ENCODE measurements at regions of chr16 and their contacts with region 1.

Region 1: DNA sequence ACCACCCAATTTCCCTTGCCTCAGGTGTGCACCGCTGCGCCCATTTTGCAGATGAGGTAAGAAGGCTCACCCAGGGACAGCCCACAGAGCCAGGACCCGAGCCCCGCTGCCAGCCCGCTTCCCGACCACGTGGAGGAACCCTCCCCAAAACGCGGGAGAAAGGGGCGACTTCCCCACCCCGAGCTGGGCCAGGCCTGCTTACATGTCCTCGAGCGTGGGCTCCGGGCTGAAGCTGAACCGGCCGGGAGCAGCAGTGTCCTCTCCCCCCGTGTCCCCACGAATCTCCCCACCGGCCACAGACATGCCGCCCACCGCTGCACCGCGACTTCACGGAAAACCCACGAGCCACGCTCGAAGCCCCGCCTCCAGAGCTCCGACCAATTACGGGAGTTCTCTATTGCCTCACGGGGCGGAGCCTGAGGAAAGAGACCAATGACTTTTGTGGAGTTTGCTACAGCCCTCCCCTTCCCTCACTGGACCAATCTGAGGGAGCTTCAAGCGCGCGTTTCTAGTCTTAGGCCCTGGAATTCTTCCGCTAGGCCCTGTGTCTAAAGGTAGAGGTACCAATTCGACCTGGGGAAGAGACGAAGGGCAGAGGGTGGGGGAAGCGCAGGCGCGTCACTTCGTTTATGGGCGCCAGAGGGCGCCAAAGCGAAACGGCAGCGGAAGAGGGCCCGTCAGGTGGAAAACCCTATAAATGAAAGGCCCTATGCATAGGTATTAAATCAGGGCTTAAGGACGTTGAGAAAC is at the start of gene DCTPP1:
- DNase-seq: peak; percentile 99
- ATAC-seq: peak; percentile 98
- H3K4me3 ChIP-seq: peak within 1 kb of the TSS; percentile 93
- H3K27ac ChIP-seq: peak within 1 kb of the TSS; percentile 81
- H3K4me1 ChIP-seq: peaks cover 13% of the 10 kb centered on the region
- H3K27me3 ChIP-seq: no peaks in the 10 kb centered on the region
- CTCF ChIP-seq: peak; percentile 85 to 92 (median 90)
- EP300 ChIP-seq: 0 out of 4 replicates have a peak, but pooled peaks of 1 of the 2 experiments have one; percentile 30
- POLR2A ChIP-seq: peak; percentile 84
- RAD21 ChIP-seq: peak; percentile 78
- polyA plus RNA-seq, gene DCTPP1: 76.6 to 162 TPM

Region 2: GRCh38 chr16:30091474-30092372 is 338.1 kb before region 1 on chr16 and contains the start of gene TBX6:
- CTCF ChIA-PET with region 1: interaction called, 10 read pairs
- POLR2A ChIA-PET with region 1: interaction called, 3 read pairs
- RAD21 ChIA-PET with region 1: interaction called, 3 read pairs
- SMC1A ChIA-PET with region 1: interaction called, 4 read pairs
- in situ Hi-C with region 1: no loop called
- intact Hi-C with region 1: no loop called
- DNase-seq: peak; percentile 64
- ATAC-seq: peak; percentile 88
- H3K4me3 ChIP-seq: peak within 1 kb of the TSS; percentile 72
- H3K27ac ChIP-seq: peak within 1 kb of the TSS; percentile 88
- H3K4me1 ChIP-seq: peaks cover 26% of the 10 kb centered on the region
- H3K27me3 ChIP-seq: no peaks in the 10 kb centered on the region
- CTCF ChIP-seq: peak; percentile 82 to 95 (median 83)
- EP300 ChIP-seq: no peak
- POLR2A ChIP-seq: peak; percentile 84
- RAD21 ChIP-seq: peak; percentile 58
- polyA plus RNA-seq, gene TBX6: not detected

Region 3: DNA sequence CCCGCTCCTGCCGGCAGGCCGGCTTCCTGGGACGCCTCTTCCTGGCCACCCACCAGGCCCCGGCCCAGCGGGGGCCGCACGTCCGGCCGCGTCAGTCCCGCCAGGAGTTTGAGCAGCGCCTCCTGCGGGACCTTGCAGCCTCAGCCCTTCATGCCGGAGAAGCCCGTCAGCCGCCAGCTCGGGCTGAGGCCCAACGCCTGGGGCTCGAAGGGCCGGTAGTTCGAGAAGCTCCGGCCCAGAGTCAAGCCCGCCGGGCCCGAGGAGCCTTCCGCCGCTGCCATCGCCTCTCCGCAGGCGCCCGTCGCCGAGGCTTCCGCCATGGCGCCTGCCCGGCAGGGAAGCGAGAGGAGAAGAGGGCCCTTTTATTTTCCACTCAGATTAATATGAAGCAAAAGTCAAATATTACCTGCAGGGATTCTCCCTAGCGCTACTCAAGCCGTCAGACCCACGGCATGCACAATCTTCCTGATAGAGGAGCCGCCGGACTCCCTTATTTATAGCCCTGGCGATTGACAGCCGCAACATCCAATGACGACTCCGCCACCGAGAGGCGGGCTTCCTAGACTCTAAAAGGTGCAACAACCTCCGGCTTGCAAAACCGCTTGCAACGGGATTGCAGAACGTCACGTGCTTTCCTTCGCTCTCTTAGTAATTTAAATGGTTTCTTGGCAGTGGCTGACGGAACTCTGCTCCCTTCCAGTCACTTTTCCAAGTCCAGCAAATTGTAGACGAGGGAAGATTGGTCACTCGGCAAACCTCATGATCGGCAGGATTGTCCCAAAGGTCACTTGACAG is 15.8 kb after region 1 on chr16 and contains the start of gene SEPHS2:
- CTCF ChIA-PET with region 1: interaction called, 19 read pairs
- POLR2A ChIA-PET with region 1: interaction called, 6 read pairs
- RAD21 ChIA-PET with region 1: interaction called, 19 read pairs
- SMC1A ChIA-PET with region 1: interaction called, 18 read pairs
- in situ Hi-C with region 1: no loop called
- intact Hi-C with region 1: no loop called
- DNase-seq: peak; percentile 84
- ATAC-seq: peak; percentile 94
- H3K4me3 ChIP-seq: peak within 1 kb of the TSS; percentile 79
- H3K27ac ChIP-seq: peak within 1 kb of the TSS; percentile 85
- H3K4me1 ChIP-seq: peaks cover 10% of the 10 kb centered on the region
- H3K27me3 ChIP-seq: no peaks in the 10 kb centered on the region
- CTCF ChIP-seq: peak; percentile 38 to 52 (median 49); a peak in 5 of 6 replicates
- EP300 ChIP-seq: no peak
- POLR2A ChIP-seq: peak; percentile 90
- RAD21 ChIP-seq: no peak
- polyA plus RNA-seq, gene SEPHS2: 21.6 to 37.4 TPM

Region 4: DNA sequence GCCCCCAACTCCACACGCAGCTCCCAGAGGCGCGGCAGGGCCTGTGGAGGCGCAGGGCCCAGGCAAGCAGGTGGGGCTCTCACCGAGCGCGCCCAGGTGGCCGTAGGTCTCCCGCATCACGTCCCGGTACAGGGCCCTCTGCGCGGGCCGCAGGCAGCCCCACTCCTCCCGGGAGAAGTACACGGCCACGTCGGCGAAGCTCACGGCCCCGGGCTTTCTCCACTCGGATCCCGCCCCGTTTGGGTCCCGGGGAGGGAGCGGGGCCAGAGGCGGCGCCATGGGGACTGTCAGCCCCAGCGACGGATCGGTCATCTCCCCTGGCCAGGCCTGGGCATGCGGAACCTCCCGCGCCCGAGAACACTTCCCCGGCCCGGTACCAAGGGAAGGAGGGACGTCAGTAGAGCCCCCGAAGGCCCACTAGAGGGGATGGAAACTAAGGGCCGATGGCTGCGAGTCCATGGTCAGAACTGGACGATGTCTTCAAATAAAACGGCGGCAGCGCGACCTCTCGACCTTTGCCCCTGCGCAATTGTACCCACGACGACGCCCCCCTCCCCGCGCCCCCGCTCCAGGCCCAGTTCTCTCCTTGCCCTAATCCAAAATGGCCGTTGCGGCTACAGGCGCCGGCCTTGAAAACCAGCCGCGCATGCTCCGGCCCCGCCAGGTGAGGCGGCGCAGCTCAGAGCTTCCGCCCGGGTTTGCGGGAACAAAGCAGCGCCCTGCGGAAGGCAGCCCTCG is 104.7 kb after region 1 on chr16 and contains the start of gene ZNF747:
- CTCF ChIA-PET with region 1: interaction called, 81 read pairs
- POLR2A ChIA-PET with region 1: interaction called, 23 read pairs
- RAD21 ChIA-PET with region 1: interaction called, 129 read pairs
- SMC1A ChIA-PET with region 1: interaction called, 43 read pairs
- in situ Hi-C with region 1: no loop called
- intact Hi-C with region 1: loop called (anchors 2 kb)
- DNase-seq: peak; percentile 51
- ATAC-seq: peak; percentile 89
- H3K4me3 ChIP-seq: peak within 1 kb of the TSS; percentile 90
- H3K27ac ChIP-seq: peak within 1 kb of the TSS; percentile 85
- H3K4me1 ChIP-seq: no peaks in the 10 kb centered on the region
- H3K27me3 ChIP-seq: no peaks in the 10 kb centered on the region
- CTCF ChIP-seq: peak in 1 of 3 experiments; percentile 1; a peak in 1 of 6 replicates
- EP300 ChIP-seq: no peak
- POLR2A ChIP-seq: peak; percentile 76
- RAD21 ChIP-seq: no peak
- polyA plus RNA-seq, gene ZNF747: 1.0 to 1.2 TPM

Region 5: GRCh38 chr16:30602616-30603277 is 172.9 kb after region 1 on chr16:
- CTCF ChIA-PET with region 1: interaction called, 89 read pairs
- POLR2A ChIA-PET with region 1: interaction called, 3 read pairs
- RAD21 ChIA-PET with region 1: interaction called, 49 read pairs
- SMC1A ChIA-PET with region 1: interaction called, 64 read pairs
- in situ Hi-C with region 1: no loop called
- intact Hi-C with region 1: loop called (anchors 1 kb)
- DNase-seq: no peak
- ATAC-seq: no peak
- H3K4me3 ChIP-seq: no peak overlapping the region
- H3K27ac ChIP-seq: no peak overlapping the region
- H3K4me1 ChIP-seq: no peaks in the 10 kb centered on the region; the same call in 1 of the 2 replicates
- H3K27me3 ChIP-seq: no peaks in the 10 kb centered on the region
- CTCF ChIP-seq: no peak
- EP300 ChIP-seq: no peak
- POLR2A ChIP-seq: 0 out of 2 replicates have a peak, but pooled peaks have one; percentile 10
- RAD21 ChIP-seq: no peak

Region 6: GRCh38 chr16:30628627-30629540 is 199.0 kb after region 1 on chr16:
- CTCF ChIA-PET with region 1: interaction called, 46 read pairs
- POLR2A ChIA-PET with region 1: interaction called, 4 read pairs
- RAD21 ChIA-PET with region 1: interaction called, 22 read pairs
- SMC1A ChIA-PET with region 1: interaction called, 18 read pairs
- in situ Hi-C with region 1: no loop called
- intact Hi-C with region 1: loop called (anchors 1 kb)
- DNase-seq: no peak
- ATAC-seq: peak; percentile 97
- H3K4me3 ChIP-seq: no peak overlapping the region
- H3K27ac ChIP-seq: no peak overlapping the region
- H3K4me1 ChIP-seq: peaks cover 5% of the 10 kb centered on the region
- H3K27me3 ChIP-seq: no peaks in the 10 kb centered on the region
- CTCF ChIP-seq: peak; percentile 90 to 95 (median 93); a peak in 5 of 6 replicates
- EP300 ChIP-seq: no peak
- POLR2A ChIP-seq: no peak
- RAD21 ChIP-seq: peak; percentile 81